ENCODE measurements at regions of chr3 and their contacts with region 1.

Region 1: GRCh38 chr3:46576-46975 is 150.0 kb upstream of the CHL1 start:
- DNase-seq: no peak
- H3K4me3 Mint-ChIP-seq: no peak overlapping the region
- H3K27ac Mint-ChIP-seq: no peak overlapping the region
- H3K4me1 Mint-ChIP-seq: no peaks in the 10 kb centered on the region
- H3K27me3 Mint-ChIP-seq: peaks cover 13% of the 10 kb centered on the region
- CTCF ChIP-seq: no peak

Region 2: DNA sequence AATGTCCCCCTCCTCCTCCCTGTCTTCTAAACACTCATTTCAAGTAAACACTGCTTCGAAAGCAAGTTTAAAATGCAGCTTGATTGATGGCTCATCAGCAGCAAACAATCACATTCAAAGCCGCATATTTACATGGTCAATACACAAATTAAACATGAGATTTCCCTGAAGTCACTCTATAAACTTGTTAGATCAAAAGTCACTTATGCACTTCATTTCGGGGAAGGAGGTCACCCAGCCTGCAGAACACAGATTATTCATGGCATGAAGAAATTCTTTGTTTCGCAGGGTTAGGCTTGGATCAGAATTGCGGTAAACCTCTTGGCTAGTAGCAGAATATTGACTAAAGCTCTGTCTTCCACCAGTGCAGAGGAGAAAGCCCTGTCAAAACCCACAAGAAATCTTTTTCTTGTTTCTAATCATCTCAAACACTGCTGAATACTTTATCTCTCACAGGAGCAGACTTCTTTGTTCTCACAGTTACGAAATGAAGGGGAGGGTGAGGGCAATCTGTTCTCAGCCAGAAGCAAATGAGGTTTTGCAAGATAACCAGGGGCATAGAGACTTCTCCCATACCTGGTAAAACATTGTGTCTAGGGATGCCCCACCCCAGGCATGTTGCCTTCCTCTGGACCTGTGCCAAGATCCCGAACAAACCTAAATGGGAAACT is 16.7 kb after region 1 on chr3:
- CTCF ChIA-PET with region 1: no interaction called
- POLR2A ChIA-PET with region 1: no interaction called
- intact Hi-C with region 1: no loop called
- DNase-seq: peak; percentile 60
- H3K4me3 Mint-ChIP-seq: peak overlapping the region; percentile 36
- H3K27ac Mint-ChIP-seq: no peak overlapping the region
- H3K4me1 Mint-ChIP-seq: peaks cover 9% of the 10 kb centered on the region
- H3K27me3 Mint-ChIP-seq: peaks cover 11% of the 10 kb centered on the region
- CTCF ChIP-seq: no peak

Region 3: DNA sequence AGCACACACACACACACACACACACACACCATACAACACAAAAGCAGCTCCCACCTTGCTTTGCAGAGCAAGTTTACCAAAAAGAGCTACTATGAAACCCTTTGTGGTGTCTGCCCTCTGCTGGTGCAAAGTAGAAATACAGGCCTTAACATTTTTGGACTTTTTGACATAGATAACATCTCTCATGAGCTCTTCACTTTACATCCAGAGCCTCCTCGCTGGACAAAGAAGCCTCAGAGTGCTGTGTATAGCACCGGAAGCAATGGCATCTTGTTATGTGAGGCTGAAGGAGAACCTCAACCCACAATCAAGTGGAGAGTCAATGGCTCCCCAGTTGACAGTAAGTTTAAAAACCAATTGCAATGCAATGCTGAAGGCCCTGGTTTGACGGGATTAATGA is 307.9 kb after region 1 on chr3:
- CTCF ChIA-PET with region 1: interaction called, 80 read pairs
- POLR2A ChIA-PET with region 1: interaction called, 6 read pairs
- intact Hi-C with region 1: loop called (anchors 1 kb)
- DNase-seq: peak; percentile 43
- H3K4me3 Mint-ChIP-seq: no peak overlapping the region
- H3K27ac Mint-ChIP-seq: no peak overlapping the region
- H3K4me1 Mint-ChIP-seq: no peaks in the 10 kb centered on the region
- H3K27me3 Mint-ChIP-seq: peaks cover 22% of the 10 kb centered on the region
- CTCF ChIP-seq: peak; percentile 33

Measured in MCF 10A (cell line).